Mammary epithelial cell (primary cell): ENCODE measurements at regions of chr2 and their contacts with region 1.

Region 1: DNA sequence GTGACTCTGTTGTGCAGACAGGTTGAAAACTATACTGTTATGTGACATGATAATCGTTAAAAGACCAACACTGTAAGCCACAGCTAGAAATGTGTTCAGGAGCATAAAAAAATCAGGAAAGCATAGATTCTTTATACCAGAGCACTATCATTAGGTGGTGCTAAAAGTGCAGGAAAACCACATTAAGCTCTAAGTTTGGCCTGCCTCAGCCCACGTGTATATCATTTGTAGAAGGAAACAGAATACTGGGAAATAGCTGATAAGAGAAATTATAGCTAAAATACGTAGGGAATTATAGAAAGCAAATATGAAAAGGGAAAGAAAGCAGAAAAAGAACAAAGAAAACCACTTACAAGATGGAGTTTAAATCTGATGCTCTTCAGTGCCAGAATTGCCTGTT is 26.5 kb upstream of the C2orf74 start:
- DNase-seq: peak; percentile 19
- H3K4me3 ChIP-seq: no peak overlapping the region
- H3K27ac ChIP-seq: no peak overlapping the region
- H3K4me1 ChIP-seq: no peaks in the 10 kb centered on the region
- H3K27me3 ChIP-seq: no peaks in the 10 kb centered on the region
- CTCF ChIP-seq: peak; percentile 29 to 36

Region 2: GRCh38 chr2:61065715-61066709 is 69.5 kb before region 1 on chr2 and contains the start of gene SANBR:
- CTCF ChIA-PET with region 1: no interaction called
- dilution Hi-C with region 1: no loop called
- in situ Hi-C with region 1: no loop called
- intact Hi-C with region 1: no loop called
- DNase-seq: peak; percentile 85
- H3K4me3 ChIP-seq: peak within 1 kb of the TSS; percentile 75 to 94 (median 82)
- H3K27ac ChIP-seq: peak within 1 kb of the TSS; percentile 54
- H3K4me1 ChIP-seq: peaks cover 8% of the 10 kb centered on the region
- H3K27me3 ChIP-seq: no peaks in the 10 kb centered on the region
- CTCF ChIP-seq: no peak
- total RNA-seq, gene SANBR: 11.8 to 12.8 TPM

Region 3: DNA sequence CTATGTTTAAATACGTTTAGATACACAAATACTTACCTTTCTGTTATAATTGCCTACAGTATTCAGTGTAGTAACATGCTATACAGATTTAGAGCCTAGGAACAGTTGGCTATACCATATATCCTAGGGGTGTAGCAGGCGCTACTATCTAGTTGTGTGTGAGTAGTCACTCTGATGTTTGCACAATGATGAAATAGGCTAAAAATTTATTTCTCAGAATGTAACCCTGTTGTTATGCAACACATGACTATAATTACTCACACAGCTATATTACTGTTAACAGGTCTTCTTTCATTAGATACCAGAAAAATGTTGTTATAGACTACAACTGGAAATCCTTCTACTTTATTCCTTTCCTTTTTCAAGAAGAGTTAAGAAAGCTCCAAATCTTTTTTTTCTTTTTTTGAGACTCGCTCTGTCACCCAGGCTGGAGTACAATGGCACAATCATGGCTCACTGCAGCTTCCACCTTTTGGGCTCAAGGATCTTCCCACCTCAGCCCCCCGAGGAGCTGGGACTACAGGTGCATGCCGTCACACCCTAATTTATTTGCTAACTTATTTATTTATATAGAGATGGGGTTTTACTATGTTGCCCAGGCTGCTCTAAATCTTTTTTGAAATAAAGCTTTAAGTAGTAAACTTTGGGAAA is 74.9 kb after region 1 on chr2:
- CTCF ChIA-PET with region 1: no interaction called
- dilution Hi-C with region 1: no loop called
- in situ Hi-C with region 1: no loop called
- intact Hi-C with region 1: no loop called
- DNase-seq: peak; percentile 80
- H3K4me3 ChIP-seq: no peak overlapping the region
- H3K27ac ChIP-seq: no peak overlapping the region
- H3K4me1 ChIP-seq: peaks cover 8% of the 10 kb centered on the region
- H3K27me3 ChIP-seq: no peaks in the 10 kb centered on the region
- CTCF ChIP-seq: no peak

Region 4: GRCh38 chr2:61233581-61233980 is 98.1 kb after region 1 on chr2:
- CTCF ChIA-PET with region 1: no interaction called
- dilution Hi-C with region 1: no loop called
- in situ Hi-C with region 1: no loop called
- intact Hi-C with region 1: no loop called
- DNase-seq: no peak
- H3K4me3 ChIP-seq: no peak overlapping the region
- H3K27ac ChIP-seq: no peak overlapping the region
- H3K4me1 ChIP-seq: no peaks in the 10 kb centered on the region
- H3K27me3 ChIP-seq: no peaks in the 10 kb centered on the region
- CTCF ChIP-seq: no peak

Region 5: DNA sequence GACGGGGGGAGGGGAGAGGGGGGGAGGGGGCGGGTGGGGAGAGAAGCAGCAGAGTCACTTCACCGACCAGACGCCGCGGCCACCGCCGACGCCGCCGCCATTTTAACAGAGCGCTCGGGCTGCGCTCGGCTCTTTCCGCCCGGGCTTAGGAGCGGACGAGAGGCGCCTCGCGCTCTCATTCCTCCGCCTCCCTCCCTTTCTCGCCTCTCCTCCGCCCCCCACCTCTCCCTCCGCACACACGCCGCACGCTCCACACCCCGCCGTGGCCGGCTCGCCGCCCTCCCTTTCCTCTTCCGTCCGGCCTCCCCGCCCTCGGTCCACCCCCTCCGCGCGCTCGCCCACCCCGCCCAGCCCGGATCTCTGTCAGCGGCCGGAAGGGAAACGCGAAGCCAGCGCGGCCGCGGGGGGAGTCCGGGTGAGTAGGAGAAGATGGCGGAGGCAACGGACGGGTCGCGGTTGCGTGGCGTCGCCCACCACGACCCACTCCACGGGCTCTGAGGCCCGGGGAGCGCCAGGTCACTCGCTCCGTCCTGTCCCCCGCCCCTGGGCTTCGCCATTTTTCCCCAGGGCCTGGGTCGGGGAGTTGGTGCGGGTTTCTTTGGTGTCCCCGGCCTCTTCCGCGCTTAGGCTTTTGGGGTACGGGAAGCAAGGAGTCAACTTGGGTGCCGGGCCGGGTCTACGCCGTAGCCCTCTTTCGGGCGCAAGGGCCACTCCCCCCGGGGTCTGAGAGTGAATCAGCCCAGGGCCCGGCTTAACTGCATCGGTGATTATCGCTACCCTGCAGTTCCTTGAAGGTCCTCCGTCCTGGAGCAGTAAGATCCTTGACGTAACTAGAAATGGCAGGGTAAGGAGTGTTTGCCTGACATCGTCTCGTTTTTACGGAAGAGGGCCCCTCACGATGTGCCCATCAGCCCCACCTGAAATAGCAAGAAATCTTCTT is 335.7 kb after region 1 on chr2 and contains the start of gene USP34:
- CTCF ChIA-PET with region 1: no interaction called
- dilution Hi-C with region 1: no loop called
- in situ Hi-C with region 1: no loop called
- intact Hi-C with region 1: loop called (anchors 5 kb)
- DNase-seq: peak; percentile 96
- H3K4me3 ChIP-seq: peak within 1 kb of the TSS; percentile 94 to 100 (median 99)
- H3K27ac ChIP-seq: peak within 1 kb of the TSS; percentile 90
- H3K4me1 ChIP-seq: peaks cover 10% of the 10 kb centered on the region
- H3K27me3 ChIP-seq: no peaks in the 10 kb centered on the region
- CTCF ChIP-seq: no peak
- total RNA-seq, gene USP34: 84.5 to 108 TPM

Region 6: DNA sequence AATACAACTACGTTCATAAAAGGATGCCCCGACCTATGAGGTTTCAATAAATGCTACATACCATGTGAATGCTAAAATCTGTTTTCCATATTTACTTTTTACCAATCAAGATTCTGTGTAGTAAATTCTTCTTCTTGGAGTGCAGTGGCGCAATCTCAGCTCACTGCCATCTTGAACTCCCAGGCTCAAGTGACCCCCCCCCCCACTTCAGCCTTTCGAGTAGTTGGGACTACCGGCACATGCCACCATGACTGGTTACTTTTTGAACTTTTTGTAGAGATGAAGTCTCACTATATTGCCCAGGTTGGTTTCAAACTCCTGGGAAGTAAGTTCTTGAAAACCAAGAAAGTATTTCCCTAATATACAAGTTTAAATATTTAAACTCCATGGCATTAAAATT is 349.8 kb after region 1 on chr2:
- CTCF ChIA-PET with region 1: no interaction called
- dilution Hi-C with region 1: no loop called
- in situ Hi-C with region 1: no loop called
- intact Hi-C with region 1: loop called (anchors 5 kb)
- DNase-seq: no peak
- H3K4me3 ChIP-seq: no peak overlapping the region
- H3K27ac ChIP-seq: no peak overlapping the region
- H3K4me1 ChIP-seq: no peaks in the 10 kb centered on the region
- H3K27me3 ChIP-seq: no peaks in the 10 kb centered on the region
- CTCF ChIP-seq: no peak

Region 7: GRCh38 chr2:61658841-61659780 is 523.6 kb after region 1 on chr2:
- CTCF ChIA-PET with region 1: interaction called, 11 read pairs
- dilution Hi-C with region 1: no loop called
- in situ Hi-C with region 1: no loop called
- intact Hi-C with region 1: loop called (anchors 1 kb)
- DNase-seq: peak; percentile 21
- H3K4me3 ChIP-seq: no peak overlapping the region
- H3K27ac ChIP-seq: no peak overlapping the region
- H3K4me1 ChIP-seq: peaks cover 5% of the 10 kb centered on the region
- H3K27me3 ChIP-seq: no peaks in the 10 kb centered on the region
- CTCF ChIP-seq: peak; percentile 65 to 66

Region 8: DNA sequence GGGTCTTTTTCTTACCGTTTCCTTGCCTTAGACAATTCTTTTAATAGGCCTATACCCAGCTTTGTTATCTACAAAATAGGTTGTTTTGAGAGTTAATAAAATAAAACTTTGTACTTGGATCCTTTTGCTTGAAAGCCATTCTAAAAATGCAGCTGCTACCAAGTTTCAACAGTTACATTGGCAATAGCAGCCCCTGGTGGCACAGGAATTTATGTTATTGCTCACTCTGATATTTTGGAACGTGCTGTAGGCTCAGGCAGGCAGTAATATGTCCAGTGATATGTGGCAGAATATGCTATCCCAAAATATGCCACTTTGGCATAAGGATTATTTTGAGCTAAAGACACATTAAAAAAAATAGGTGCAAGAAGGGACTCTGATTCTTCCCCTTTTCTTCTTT is 763.3 kb after region 1 on chr2:
- CTCF ChIA-PET with region 1: interaction called, 3 read pairs
- dilution Hi-C with region 1: no loop called
- in situ Hi-C with region 1: no loop called
- intact Hi-C with region 1: loop called (anchors 10 kb)
- DNase-seq: no peak
- H3K4me3 ChIP-seq: no peak overlapping the region
- H3K27ac ChIP-seq: no peak overlapping the region
- H3K4me1 ChIP-seq: no peaks in the 10 kb centered on the region
- H3K27me3 ChIP-seq: no peaks in the 10 kb centered on the region
- CTCF ChIP-seq: peak; percentile 36 to 62